ENCODE measurements at regions of chr9 and their contacts with region 1.

Region 1: GRCh38 chr9:33452828-33453271 is 5.5 kb upstream of the AQP3 start:
- DNase-seq: peak; percentile 24 to 50 (median 40)
- H3K4me3 ChIP-seq: no peak overlapping the region
- H3K4me3 Mint-ChIP-seq: peak overlapping the region in 7 of 8 donors; percentile 3 to 65 (median 32)
- H3K27ac ChIP-seq: peak overlapping the region; percentile 36
- H3K27ac Mint-ChIP-seq: peak overlapping the region; percentile 55 to 87 (median 83)
- H3K4me1 ChIP-seq: peaks cover 69% of the 10 kb centered on the region
- H3K4me1 Mint-ChIP-seq: peaks cover 43 to 70% (median 57%) of the 10 kb centered on the region in 4 donors
- H3K27me3 ChIP-seq: no peaks in the 10 kb centered on the region
- H3K27me3 Mint-ChIP-seq: no peaks in the 10 kb centered on the region

Region 2: DNA sequence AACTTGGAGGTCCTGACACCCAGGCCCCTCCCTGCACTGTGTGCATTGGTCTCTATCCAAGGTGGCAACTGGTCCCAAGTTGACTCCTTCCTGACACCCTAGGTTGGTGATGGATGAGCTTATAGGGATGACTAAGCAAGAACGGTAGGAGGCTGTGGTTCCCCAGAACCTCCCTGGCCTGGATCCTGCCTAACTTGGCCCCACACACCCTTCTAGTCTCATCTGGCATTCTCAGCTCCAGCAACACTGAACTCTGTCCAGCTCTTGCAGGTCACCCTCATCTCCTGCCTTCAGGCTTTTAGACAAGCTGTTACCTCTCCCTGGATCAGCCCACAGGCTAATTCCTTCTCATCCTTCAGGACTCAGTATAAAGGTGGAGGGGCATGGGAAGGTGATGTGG is 21.9 kb before region 1 on chr9:
- CTCF ChIA-PET with region 1: interaction called, 22 read pairs
- POLR2A ChIA-PET with region 1: interaction called, 24 read pairs
- intact Hi-C with region 1: no loop called
- DNase-seq: no peak
- H3K4me3 ChIP-seq: no peak overlapping the region
- H3K4me3 Mint-ChIP-seq: no peak overlapping the region
- H3K27ac ChIP-seq: no peak overlapping the region
- H3K27ac Mint-ChIP-seq: peak overlapping the region in 1 of 7 donors; percentile 56
- H3K4me1 ChIP-seq: no peaks in the 10 kb centered on the region
- H3K4me1 Mint-ChIP-seq: peaks cover 5 to 23% (median 13%) of the 10 kb centered on the region in 4 donors
- H3K27me3 ChIP-seq: no peaks in the 10 kb centered on the region
- H3K27me3 Mint-ChIP-seq: no peaks in the 10 kb centered on the region

Region 3: GRCh38 chr9:33510264-33511183 is 57.7 kb after region 1 on chr9:
- CTCF ChIA-PET with region 1: interaction called, 3 read pairs
- POLR2A ChIA-PET with region 1: no interaction called
- intact Hi-C with region 1: loop called (anchors 10 kb)
- DNase-seq: peak; percentile 25 to 45 (median 33)
- H3K4me3 ChIP-seq: peak overlapping the region; percentile 41 to 76
- H3K4me3 Mint-ChIP-seq: peak overlapping the region; percentile 95 to 98 (median 96)
- H3K27ac ChIP-seq: no peak overlapping the region
- H3K27ac Mint-ChIP-seq: peak overlapping the region; percentile 52 to 97 (median 93)
- H3K4me1 ChIP-seq: no peaks in the 10 kb centered on the region
- H3K4me1 Mint-ChIP-seq: peaks cover 2 to 4% (median 3%) of the 10 kb centered on the region in 4 donors
- H3K27me3 ChIP-seq: no peaks in the 10 kb centered on the region
- H3K27me3 Mint-ChIP-seq: peaks cover 0 to 2% of the 10 kb centered on the region in 2 donors

Measured in CD4-positive, alpha-beta memory T cell (primary cell).